Caco-2 (cell line): ENCODE measurements at regions of chr2 and their contacts with region 1.

Region 1: DNA sequence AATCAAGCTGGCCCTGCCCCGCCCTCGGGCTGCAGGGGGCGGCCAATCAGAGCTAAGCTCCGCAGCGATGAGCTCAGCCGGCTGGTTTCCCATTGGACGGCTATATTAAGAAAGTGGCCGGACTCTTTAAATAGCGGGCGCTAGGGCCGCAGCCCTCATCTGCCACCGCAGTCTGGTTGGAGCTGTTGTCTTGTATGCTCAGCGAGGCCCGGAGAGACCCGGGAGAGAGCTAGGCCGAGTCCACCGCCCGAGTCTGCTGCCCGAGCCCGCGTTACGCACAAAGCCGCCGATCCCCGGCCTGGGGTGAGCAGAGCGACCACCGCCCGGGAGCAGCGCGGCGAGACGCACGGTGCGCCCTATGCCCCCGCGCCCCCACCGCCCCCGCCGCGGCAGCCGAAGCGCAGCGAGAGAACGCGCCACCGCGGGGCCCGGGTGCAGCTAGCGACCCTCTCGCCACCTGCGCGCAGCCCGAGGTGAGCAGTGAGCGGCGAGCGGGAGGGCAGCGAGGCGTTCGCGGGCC is at the start of gene RHOB:
- DNase-seq: peak; percentile 97 to 98
- H3K4me3 ChIP-seq: peak within 1 kb of the TSS; percentile 80
- H3K4me3 Mint-ChIP-seq: peak within 1 kb of the TSS; percentile 87
- H3K27ac Mint-ChIP-seq: peak within 1 kb of the TSS; percentile 84
- H3K4me1 ChIP-seq: peaks cover 26% of the 10 kb centered on the region
- H3K4me1 Mint-ChIP-seq: peaks cover 8% of the 10 kb centered on the region
- H3K27me3 ChIP-seq: no peaks in the 10 kb centered on the region
- H3K27me3 Mint-ChIP-seq: no peaks in the 10 kb centered on the region
- CTCF ChIP-seq: no peak
- total RNA-seq, gene RHOB: 20.8 and 24.1 TPM in 2 replicates

Region 2: DNA sequence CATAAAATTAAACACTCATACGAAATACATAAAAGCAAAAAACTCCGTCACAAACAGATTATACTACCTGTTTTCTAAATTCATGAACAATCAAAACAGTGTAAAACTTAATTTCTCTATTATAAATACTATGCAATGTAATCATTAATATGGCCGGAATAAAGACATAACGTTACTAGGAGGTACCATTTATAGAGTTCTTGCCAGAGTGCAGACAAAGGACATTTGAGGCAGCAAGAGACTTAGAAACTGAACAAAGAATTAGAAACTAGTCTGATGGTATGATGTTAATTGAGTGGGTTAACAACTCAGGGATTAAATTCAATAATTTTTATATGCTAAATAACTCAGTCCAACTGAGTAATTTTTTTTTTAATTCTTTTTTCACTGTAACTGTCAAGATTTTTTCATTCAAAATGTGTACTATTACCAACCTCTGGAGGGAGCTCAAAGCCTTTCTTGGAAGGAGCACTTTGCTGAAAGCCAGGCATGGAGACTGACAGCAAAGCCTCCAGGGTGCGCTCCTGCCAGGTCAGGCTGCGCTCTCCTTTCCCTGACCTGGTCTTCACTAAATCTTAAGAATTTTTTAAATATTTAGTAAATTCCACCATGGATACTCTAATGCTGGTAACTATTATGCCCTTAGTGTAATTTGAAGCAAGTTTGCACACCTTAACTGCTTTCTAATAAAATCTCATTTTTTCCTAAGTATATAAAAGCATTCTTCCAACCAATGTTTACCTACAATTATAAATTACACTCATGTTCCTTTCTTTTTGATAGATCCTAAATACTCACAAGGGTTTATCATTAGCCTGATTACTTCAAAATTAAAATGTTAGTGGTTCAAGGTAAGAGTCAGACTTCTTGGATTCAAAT is 491.2 kb before region 1 on chr2:
- CTCF ChIA-PET with region 1: no interaction called
- POLR2A ChIA-PET with region 1: no interaction called
- intact Hi-C with region 1: no loop called
- DNase-seq: peak; percentile 78 to 82
- H3K4me3 ChIP-seq: no peak overlapping the region
- H3K4me3 Mint-ChIP-seq: no peak overlapping the region
- H3K27ac Mint-ChIP-seq: no peak overlapping the region
- H3K4me1 ChIP-seq: no peaks in the 10 kb centered on the region
- H3K4me1 Mint-ChIP-seq: no peaks in the 10 kb centered on the region
- H3K27me3 ChIP-seq: no peaks in the 10 kb centered on the region
- H3K27me3 Mint-ChIP-seq: no peaks in the 10 kb centered on the region
- CTCF ChIP-seq: peak; percentile 88 to 95

Region 3: GRCh38 chr2:20396356-20397000 is 50.5 kb before region 1 on chr2:
- CTCF ChIA-PET with region 1: interaction called, 8 read pairs
- POLR2A ChIA-PET with region 1: interaction called, 4 read pairs
- intact Hi-C with region 1: loop called (anchors 2 kb)
- DNase-seq: no peak
- H3K4me3 ChIP-seq: no peak overlapping the region
- H3K4me3 Mint-ChIP-seq: no peak overlapping the region
- H3K27ac Mint-ChIP-seq: no peak overlapping the region
- H3K4me1 ChIP-seq: no peaks in the 10 kb centered on the region
- H3K4me1 Mint-ChIP-seq: no peaks in the 10 kb centered on the region
- H3K27me3 ChIP-seq: no peaks in the 10 kb centered on the region
- H3K27me3 Mint-ChIP-seq: no peaks in the 10 kb centered on the region
- CTCF ChIP-seq: no peak

Region 4: GRCh38 chr2:20525041-20526035 is 78.4 kb after region 1 on chr2:
- CTCF ChIA-PET with region 1: interaction called, 16 read pairs
- POLR2A ChIA-PET with region 1: interaction called, 28 read pairs
- intact Hi-C with region 1: loop called (anchors 2 kb)
- DNase-seq: peak; percentile 59 to 66
- H3K4me3 ChIP-seq: no peak overlapping the region
- H3K4me3 Mint-ChIP-seq: no peak overlapping the region
- H3K27ac Mint-ChIP-seq: no peak overlapping the region
- H3K4me1 ChIP-seq: peaks cover 14% of the 10 kb centered on the region
- H3K4me1 Mint-ChIP-seq: peaks cover 16% of the 10 kb centered on the region
- H3K27me3 ChIP-seq: no peaks in the 10 kb centered on the region
- H3K27me3 Mint-ChIP-seq: no peaks in the 10 kb centered on the region
- CTCF ChIP-seq: peak in 1 of 2 experiments; percentile 29

Region 5: DNA sequence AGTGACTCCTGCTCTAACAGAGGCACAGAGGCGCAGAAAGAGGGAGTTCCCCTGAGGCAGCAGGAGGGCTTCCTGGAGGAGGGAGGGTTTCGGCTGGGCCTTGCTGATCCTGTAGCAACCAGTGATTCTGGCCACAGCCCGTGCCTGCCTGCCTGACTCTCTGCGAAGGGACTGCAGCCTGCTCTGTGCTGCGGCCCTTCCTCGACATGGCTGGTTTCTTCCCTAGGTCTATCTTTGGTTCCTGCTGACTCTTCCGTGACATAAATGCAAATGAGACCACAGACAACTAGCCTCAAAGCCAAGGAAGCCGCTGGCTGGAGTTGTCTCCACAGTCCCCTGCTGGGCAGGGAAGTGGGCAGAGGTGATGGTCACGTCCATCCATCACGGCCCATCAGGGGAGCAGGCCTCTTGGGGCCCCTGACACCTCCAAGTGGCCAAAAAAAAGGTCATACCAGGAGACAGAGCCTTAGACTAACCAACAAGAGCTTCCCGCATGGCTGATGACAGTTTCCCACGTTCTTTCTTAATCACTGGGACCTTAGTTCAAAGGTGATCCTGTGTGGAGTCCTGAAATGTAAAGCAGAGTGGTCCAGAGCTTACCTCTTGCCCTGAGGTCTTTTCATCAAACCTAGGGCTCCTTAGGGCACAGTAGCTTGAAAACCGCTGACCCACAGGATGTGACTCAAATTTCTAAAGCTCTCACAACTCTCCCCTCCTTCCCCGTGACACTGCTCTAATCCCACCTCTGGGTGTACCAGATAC is 148.6 kb after region 1 on chr2:
- CTCF ChIA-PET with region 1: interaction called, 14 read pairs
- POLR2A ChIA-PET with region 1: interaction called, 31 read pairs
- intact Hi-C with region 1: loop called (anchors 1 kb)
- DNase-seq: peak in 1 of 2 experiments; percentile 32
- H3K4me3 ChIP-seq: no peak overlapping the region
- H3K4me3 Mint-ChIP-seq: no peak overlapping the region
- H3K27ac Mint-ChIP-seq: peak overlapping the region; percentile 74
- H3K4me1 ChIP-seq: peaks cover 60% of the 10 kb centered on the region
- H3K4me1 Mint-ChIP-seq: peaks cover 33% of the 10 kb centered on the region
- H3K27me3 ChIP-seq: no peaks in the 10 kb centered on the region
- H3K27me3 Mint-ChIP-seq: no peaks in the 10 kb centered on the region
- CTCF ChIP-seq: no peak

Region 6: DNA sequence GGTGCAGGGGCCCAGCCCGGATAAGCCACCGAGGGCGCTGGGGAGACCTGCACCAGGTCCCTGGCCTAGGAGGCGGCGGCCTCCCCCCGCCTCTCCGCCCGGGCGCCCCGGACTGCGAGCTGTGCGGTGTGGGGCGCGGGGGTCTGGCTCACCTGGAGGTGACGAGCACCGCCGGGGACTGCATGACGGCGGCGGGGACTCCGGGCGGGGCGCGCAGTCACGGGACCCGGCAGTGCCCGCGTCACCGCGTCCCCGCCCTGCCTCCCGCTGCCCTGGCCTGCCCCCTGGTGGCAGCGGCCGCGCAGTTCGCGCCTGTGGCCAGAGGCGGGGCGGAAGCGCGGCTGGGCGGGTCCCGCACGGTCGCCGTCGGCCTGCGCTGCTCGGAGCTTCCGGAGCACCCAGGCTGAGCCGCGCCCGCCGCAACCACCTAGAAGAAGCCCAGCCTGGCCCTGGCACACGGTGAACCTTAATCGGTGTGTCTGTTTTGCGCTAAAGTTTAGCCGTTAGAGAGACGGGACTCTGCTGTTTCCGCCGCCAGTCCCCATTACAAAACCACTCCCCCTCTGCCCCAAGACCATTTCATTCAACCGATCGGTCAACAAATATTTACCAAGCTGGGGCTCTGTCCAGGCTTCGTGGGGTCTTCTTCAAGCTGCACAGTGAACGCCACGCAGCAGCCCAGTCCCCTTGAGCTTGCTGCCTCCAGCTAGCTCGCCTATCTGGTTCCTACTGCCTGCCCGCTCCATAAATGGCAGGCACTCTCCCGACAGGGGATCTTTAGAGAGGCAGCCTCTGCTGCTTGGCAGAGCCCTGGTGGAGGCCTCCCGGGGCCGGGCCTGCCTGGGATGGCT is 204.1 kb after region 1 on chr2 and contains the start of gene HS1BP3:
- CTCF ChIA-PET with region 1: interaction called, 18 read pairs
- POLR2A ChIA-PET with region 1: interaction called, 33 read pairs
- intact Hi-C with region 1: loop called (anchors 1 kb)
- DNase-seq: peak; percentile 80 to 96
- H3K4me3 ChIP-seq: peak within 1 kb of the TSS; percentile 92
- H3K4me3 Mint-ChIP-seq: peak within 1 kb of the TSS; percentile 81
- H3K27ac Mint-ChIP-seq: peak within 1 kb of the TSS; percentile 81
- H3K4me1 ChIP-seq: peaks cover 13% of the 10 kb centered on the region
- H3K4me1 Mint-ChIP-seq: peaks cover 7% of the 10 kb centered on the region
- H3K27me3 ChIP-seq: no peaks in the 10 kb centered on the region
- H3K27me3 Mint-ChIP-seq: no peaks in the 10 kb centered on the region
- CTCF ChIP-seq: peak; percentile 55 to 95
- total RNA-seq, gene HS1BP3: 26.5 and 31.1 TPM in 2 replicates